ENCODE measurements at regions of chr10 and their contacts with region 1.

Region 1: GRCh38 chr10:91006001-91006751 is 85.3 kb upstream of the ANKRD1 start:
- DNase-seq: peak; percentile 90
- H3K4me3 Mint-ChIP-seq: peak overlapping the region; percentile 22
- H3K27ac Mint-ChIP-seq: peak overlapping the region; percentile 51
- H3K4me1 Mint-ChIP-seq: peaks cover 25% of the 10 kb centered on the region
- H3K27me3 Mint-ChIP-seq: peaks cover 27% of the 10 kb centered on the region

Region 2: DNA sequence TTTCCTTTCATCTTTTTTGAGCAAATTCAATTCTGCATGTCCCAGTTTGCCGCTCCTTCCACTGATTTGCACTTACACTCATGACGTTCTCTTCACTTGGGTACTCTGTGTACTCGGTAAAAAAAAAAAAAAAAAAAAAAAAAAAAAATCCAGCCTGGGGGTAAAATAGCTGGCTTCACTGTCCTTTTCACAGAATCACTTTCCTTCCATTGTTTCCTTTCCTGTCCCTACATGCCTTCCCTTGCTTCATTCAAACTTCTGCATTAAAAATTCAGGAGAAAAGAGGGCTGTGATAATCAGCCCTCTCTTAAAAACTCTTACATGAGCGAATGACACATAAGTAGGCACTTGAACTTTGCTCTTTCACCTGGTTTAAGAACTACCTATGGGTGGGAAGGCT is 94.0 kb before region 1 on chr10:
- intact Hi-C with region 1: loop called (anchors 5 kb)
- DNase-seq: no peak
- H3K4me3 Mint-ChIP-seq: no peak overlapping the region
- H3K27ac Mint-ChIP-seq: no peak overlapping the region
- H3K4me1 Mint-ChIP-seq: peaks cover 2% of the 10 kb centered on the region
- H3K27me3 Mint-ChIP-seq: peaks cover 7% of the 10 kb centered on the region

Region 3: DNA sequence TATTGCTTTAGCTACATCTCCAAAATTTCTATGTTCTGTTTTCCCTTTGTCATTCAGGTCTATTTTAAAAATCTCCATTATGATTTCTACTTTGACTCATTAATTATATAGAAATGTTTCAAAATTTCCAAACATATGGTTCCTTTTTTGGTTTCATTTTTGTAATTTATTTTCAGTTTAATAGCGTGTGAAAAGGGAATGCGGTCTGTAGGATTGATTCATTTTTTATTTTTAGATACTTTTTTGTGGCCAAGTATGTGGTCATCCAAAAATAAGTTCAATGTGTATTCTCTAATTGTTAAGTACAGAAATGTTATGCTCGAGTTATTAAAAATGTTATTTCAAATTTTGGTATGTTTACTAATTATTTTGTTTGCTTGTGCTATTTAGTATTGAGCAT is 12.8 kb before region 1 on chr10:
- intact Hi-C with region 1: no loop called
- DNase-seq: no peak
- H3K4me3 Mint-ChIP-seq: no peak overlapping the region
- H3K27ac Mint-ChIP-seq: no peak overlapping the region
- H3K4me1 Mint-ChIP-seq: no peaks in the 10 kb centered on the region
- H3K27me3 Mint-ChIP-seq: peaks cover 9% of the 10 kb centered on the region

Region 4: DNA sequence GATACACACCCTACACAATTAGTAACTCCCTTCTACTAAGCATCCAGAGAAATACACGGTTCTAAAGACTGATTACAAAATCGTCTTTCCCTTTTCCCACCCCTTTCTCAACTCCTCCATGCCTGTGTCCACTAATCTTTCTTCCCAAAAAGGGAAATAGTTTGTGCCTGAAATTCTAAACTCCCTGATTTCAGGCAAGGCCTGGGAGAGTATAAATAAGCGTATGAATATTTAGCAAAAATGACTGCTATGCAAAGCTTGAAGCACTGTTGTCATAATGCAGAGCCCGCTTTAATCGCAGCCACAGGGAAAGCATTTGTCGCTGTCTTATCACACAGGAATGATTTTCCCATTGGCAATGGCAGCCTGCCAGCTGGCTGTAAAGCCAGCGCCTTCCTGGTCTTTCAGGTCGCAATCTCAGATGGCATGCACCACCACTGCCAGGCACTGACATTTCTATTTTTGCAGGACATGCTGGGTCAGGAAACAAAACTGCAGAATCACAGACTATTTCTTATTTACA is 71.4 kb after region 1 on chr10:
- intact Hi-C with region 1: no loop called
- DNase-seq: no peak
- H3K4me3 Mint-ChIP-seq: no peak overlapping the region
- H3K27ac Mint-ChIP-seq: no peak overlapping the region
- H3K4me1 Mint-ChIP-seq: no peaks in the 10 kb centered on the region
- H3K27me3 Mint-ChIP-seq: peaks cover 38% of the 10 kb centered on the region

Region 5: GRCh38 chr10:91088300-91089140 is 82.3 kb after region 1 on chr10:
- intact Hi-C with region 1: loop called (anchors 5 kb)
- DNase-seq: no peak
- H3K4me3 Mint-ChIP-seq: no peak overlapping the region
- H3K27ac Mint-ChIP-seq: no peak overlapping the region
- H3K4me1 Mint-ChIP-seq: no peaks in the 10 kb centered on the region
- H3K27me3 Mint-ChIP-seq: peaks cover 19% of the 10 kb centered on the region

Region 6: DNA sequence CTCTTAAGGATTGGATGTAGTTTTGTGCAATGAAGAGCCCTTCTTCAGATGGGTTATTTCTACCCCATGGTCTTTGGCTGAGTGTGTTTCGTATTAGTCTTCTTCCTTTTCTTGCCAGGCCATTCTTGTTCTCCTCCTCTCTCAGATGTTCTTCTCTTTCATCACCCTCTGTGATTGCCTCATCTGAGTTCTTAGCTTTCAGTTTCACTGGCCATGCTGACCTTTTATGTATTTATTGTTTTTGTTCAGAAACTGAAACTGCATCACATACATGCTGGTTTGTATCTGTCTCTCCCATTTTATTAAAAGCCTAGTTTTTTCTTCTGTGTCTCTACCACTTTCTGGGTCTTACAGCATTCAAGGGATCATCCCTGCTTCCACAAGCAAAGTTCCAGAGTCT is 192.6 kb after region 1 on chr10:
- intact Hi-C with region 1: loop called (anchors 2 kb)
- DNase-seq: peak; percentile 84
- H3K4me3 Mint-ChIP-seq: peak overlapping the region; percentile 67
- H3K27ac Mint-ChIP-seq: peak overlapping the region; percentile 78
- H3K4me1 Mint-ChIP-seq: peaks cover 68% of the 10 kb centered on the region
- H3K27me3 Mint-ChIP-seq: no peaks in the 10 kb centered on the region

Region 7: DNA sequence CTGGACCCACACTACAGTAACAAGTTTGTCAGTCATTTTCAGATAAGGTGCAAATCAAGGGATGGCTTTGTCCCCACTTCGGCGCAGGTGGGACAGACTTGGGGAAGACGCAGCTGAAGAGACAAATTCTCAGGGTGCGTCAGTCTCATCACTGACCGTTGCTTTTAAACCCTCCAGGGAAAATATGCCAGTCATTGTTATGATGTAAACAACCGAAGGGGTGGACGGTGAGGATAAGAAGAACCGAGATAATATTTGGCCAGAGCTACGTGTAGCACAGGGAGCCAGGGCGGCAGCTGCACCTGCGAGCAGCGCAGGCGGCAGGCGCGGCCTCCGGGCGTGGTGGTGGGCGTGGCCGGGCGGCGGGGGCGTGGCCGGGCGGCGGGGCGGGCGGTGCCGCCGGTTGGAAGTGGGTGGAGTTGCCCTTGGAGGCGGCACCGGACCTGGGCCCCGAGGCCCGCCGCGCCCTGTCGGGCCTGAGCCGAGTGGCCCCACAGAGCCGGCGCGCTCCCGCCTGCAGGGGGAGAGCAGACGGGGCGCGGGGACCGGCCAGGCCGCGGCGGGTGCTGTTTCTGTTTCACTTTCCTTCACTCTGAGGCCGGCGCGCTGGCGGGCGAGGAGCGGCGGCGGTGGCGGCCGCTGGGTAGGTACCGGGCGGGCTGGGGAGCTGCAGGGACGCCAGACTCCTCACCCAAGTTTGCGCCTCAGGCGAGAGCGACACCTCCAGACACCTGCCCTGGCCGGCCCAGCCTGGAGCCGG is 214.2 kb after region 1 on chr10 and contains the start of gene PCGF5:
- intact Hi-C with region 1: loop called (anchors 1 kb)
- DNase-seq: peak; percentile 97
- H3K4me3 Mint-ChIP-seq: peak within 1 kb of the TSS; percentile 96
- H3K27ac Mint-ChIP-seq: peak within 1 kb of the TSS; percentile 87
- H3K4me1 Mint-ChIP-seq: peaks cover 46% of the 10 kb centered on the region
- H3K27me3 Mint-ChIP-seq: no peaks in the 10 kb centered on the region
- total RNA-seq, gene PCGF5: 42.1 and 45.4 TPM in 2 replicates

Region 8: GRCh38 chr10:91409869-91410637 is 403.9 kb after region 1 on chr10 and contains the start of gene HECTD2:
- intact Hi-C with region 1: loop called (anchors 2 kb)
- DNase-seq: peak; percentile 94
- H3K4me3 Mint-ChIP-seq: peak within 1 kb of the TSS; percentile 93
- H3K27ac Mint-ChIP-seq: peak within 1 kb of the TSS; percentile 96
- H3K4me1 Mint-ChIP-seq: peaks cover 17% of the 10 kb centered on the region
- H3K27me3 Mint-ChIP-seq: peaks cover 25% of the 10 kb centered on the region
- total RNA-seq, gene HECTD2: 4.5 and 5.5 TPM in 2 replicates